ENCODE measurements at regions of chr4 and their contacts with region 1.

Region 1: GRCh38 chr4:77862478-77863216 is at the start of gene MRPL1:
- DNase-seq: peak; percentile 89 to 93
- H3K4me3 ChIP-seq: peak within 1 kb of the TSS; percentile 65 to 66
- H3K27ac ChIP-seq: peak within 1 kb of the TSS; percentile 89 to 93
- H3K4me1 ChIP-seq: peaks cover 0 to 19% (median 5%) of the 10 kb centered on the region in 4 donors
- H3K27me3 ChIP-seq: no peaks in the 10 kb centered on the region
- CTCF ChIP-seq: peak; percentile 1 to 13

Region 2: DNA sequence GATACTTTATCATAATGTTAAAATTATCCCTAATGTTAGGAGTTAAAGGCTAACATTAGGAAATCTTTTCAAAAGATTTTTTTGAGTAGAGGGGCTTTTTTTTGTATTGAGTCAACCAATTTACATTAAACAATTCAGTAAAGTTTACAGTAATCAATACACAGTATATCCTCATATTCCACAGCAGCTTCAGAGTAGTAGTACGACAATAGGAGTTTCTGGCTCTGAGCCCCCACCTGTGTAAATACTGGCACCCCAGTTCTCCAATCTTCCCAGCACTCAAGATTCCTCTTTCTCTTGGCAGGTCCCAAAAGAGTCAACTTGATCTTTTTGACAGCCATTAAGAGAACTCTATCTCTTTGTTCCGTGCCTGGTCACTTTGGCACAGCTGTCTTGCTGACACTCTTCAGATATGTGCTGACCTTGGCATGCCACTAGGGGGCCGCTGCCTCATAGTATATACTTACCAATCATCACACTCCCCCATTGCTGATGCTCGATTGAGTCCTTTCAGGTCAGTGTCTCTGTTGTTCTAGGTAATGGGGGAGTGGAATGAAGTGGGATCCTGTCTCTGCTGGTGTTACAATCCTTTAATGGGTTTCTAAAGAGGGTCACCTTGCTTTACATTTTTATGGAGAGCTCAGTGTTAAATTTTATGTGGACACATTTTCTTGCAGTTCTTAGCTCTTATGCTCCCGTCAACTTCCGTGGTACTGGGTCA is 767.4 kb before region 1 on chr4:
- intact Hi-C with region 1: no loop called
- DNase-seq: peak; percentile 85
- H3K4me3 ChIP-seq: no peak overlapping the region
- H3K27ac ChIP-seq: peak overlapping the region in 1 of 2 donors; percentile 2
- H3K4me1 ChIP-seq: peaks cover 0 to 8% (median 2%) of the 10 kb centered on the region in 4 donors
- H3K27me3 ChIP-seq: no peaks in the 10 kb centered on the region
- CTCF ChIP-seq: peak; percentile 83 to 86

Region 3: GRCh38 chr4:77819843-77820648 is 42.6 kb before region 1 on chr4:
- intact Hi-C with region 1: loop called (anchors 5 kb)
- DNase-seq: peak; percentile 89 to 94
- H3K4me3 ChIP-seq: peak overlapping the region; percentile 96 to 99
- H3K27ac ChIP-seq: peak overlapping the region; percentile 98 to 99
- H3K4me1 ChIP-seq: peaks cover 0 to 38% (median 24%) of the 10 kb centered on the region in 4 donors
- H3K27me3 ChIP-seq: no peaks in the 10 kb centered on the region
- CTCF ChIP-seq: no peak